Right lobe of liver (tissue), 6 donors: ENCODE measurements at regions of chr19 and their contacts with region 1.

Region 1: DNA sequence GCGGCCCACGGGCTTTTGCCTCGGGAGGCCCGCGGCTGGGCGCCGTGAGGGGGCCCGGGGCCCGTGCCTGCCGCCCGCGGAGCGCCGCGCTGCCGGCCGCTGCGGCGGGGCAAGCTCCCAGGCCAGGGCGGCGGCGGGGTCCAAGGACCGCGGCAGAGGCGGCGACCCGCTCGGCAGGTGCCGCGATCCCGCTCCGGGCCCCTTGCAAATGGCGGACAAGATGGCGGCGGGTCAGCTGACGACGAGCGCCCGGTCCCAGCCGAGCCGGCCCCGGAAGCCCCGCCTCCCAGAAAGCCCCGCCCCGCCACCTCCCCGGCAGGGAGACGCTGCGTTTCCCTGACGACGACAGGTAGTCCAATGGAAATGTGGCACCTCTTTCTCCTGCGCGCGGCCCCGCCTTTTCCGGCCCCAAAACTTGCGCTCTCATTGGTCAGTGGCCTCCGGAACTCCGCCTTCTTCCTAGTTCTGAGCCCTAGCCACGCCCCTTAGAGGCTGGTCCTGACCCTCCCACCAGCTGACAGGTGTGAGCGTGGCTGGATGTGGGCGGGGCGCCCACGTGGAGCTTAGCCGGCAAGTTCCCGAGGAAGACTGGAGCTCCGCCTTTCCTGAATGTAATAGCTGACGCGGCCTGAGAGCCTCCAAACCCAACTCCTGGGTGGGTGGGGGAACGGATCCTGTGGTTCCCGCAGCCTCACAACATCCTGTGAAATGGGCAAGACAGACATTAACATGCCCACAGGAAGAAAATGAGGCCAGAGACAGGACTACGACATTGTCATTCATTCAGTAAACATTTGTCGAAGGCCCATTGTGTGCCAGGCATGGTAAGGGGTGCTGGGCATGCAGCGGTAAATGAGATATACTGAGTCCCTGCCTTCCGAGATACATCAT is at the start of gene AP3D1:
- DNase-seq: peak; percentile 100
- ATAC-seq: peak; percentile 91 to 96 (median 94)
- H3K4me3 ChIP-seq: peak within 1 kb of the TSS; percentile 58 to 98 (median 92)
- H3K27ac ChIP-seq: peak within 1 kb of the TSS; percentile 32 to 80 (median 59)
- H3K4me1 ChIP-seq: peaks cover 0 to 28% (median 14%) of the 10 kb centered on the region in 4 donors
- H3K27me3 ChIP-seq: no peaks in the 10 kb centered on the region
- CTCF ChIP-seq: no peak
- POLR2A ChIP-seq: peak; percentile 48
- total RNA-seq, gene AP3D1: 55.5 to 99.0 (median 65.5) TPM

Region 2: DNA sequence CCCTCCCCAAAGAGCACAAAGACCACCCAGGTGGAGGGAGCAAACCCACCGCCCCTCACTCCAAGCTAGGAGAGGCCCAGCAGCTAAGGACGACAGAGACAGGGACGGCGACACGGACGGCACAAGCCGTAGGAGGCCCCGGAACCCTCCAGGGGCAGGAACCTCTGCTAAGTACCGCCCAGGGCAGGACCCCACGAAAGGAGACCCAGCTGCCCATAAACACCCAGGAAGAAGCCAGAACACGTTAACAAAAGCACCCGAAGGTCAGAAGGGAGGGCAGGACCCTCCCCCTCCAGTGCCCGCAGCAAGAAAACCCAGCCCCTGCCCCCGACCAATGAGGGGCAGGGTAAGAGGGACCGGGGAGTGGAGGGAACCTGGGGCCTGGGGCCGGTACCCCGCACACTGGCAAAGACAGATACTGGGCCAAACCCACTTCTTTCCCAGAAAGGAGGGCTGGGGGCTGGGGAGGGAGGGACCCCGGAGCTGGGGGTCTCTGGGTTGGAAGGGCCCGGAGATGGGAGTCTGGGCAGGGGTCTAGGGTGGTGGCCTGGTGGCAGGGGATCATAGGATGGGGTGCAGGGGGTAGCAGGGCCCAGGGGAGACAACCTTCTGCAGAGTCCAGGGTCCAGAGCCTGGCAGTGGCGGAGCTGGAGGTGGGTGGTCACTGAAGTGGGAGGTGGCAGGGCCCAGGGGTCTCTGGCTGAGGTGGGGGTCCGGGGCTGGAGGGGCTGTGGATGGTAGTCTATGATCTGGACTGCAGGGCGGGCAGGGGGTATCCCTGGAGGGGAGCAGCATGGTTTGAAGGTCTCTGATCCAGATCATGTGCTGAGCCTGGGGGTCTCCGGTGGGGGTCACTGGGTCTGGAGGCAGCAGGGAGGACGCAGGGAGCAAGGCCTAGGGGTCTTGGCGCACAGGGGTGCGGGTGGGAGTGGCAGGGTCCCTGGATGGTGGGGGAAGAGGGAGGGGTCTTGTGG is 138.4 kb before region 1 on chr19:
- intact Hi-C with region 1: no loop called
- DNase-seq: peak in 1 of 3 donors; percentile 48
- ATAC-seq: no peak
- H3K4me3 ChIP-seq: no peak overlapping the region
- H3K27ac ChIP-seq: no peak overlapping the region
- H3K4me1 ChIP-seq: no peaks in the 10 kb centered on the region
- H3K27me3 ChIP-seq: no peaks in the 10 kb centered on the region
- CTCF ChIP-seq: no peak
- POLR2A ChIP-seq: no peak

Region 3: GRCh38 chr19:2199215-2199614 is 47.6 kb after region 1 on chr19:
- intact Hi-C with region 1: no loop called
- DNase-seq: no peak
- ATAC-seq: no peak
- H3K4me3 ChIP-seq: no peak overlapping the region
- H3K27ac ChIP-seq: no peak overlapping the region
- H3K4me1 ChIP-seq: no peaks in the 10 kb centered on the region
- H3K27me3 ChIP-seq: no peaks in the 10 kb centered on the region
- CTCF ChIP-seq: no peak
- POLR2A ChIP-seq: no peak

Region 4: DNA sequence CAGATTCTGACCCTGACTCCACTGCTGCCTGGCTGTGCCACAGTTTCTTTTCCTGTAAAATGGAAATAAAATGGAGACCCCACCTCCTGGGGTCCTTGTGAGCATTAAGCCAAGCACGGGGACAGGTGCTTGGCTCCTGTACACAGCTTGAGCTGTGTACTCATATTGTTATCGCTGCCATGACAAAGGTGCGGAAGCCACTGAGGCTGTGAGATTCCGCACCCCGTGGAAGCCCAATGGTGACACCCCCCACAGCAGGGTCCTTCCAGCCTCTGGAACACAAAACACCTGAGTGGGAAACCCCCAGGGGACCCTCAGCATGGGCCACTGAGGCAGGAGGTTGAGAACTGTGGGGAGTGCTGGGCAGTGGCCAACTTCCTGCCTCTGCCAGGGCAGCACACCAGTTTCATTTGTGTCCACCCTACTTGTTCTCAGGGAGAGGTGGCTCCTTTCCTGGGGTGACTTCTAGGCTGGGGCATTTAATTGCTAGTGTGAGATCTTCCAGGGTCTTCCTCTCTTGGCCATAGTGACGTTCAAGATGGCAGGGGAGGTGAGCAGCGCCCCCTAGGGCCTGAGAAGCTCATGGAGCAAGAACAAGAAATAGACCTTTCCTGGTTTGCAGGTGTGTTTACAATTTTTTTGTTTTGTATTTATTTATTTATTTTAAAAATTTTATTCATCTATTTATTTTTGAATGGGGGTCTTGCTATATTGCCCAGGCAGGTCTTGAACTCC is 110.0 kb after region 1 on chr19:
- intact Hi-C with region 1: no loop called
- DNase-seq: no peak
- ATAC-seq: no peak
- H3K4me3 ChIP-seq: no peak overlapping the region
- H3K27ac ChIP-seq: no peak overlapping the region
- H3K4me1 ChIP-seq: no peaks in the 10 kb centered on the region
- H3K27me3 ChIP-seq: no peaks in the 10 kb centered on the region
- CTCF ChIP-seq: peak; percentile 38 to 61 (median 52)
- POLR2A ChIP-seq: no peak

Region 5: GRCh38 chr19:2315818-2316353 is 164.3 kb after region 1 on chr19:
- intact Hi-C with region 1: no loop called
- DNase-seq: peak; percentile 77 to 84 (median 79)
- ATAC-seq: peak; percentile 89 to 97 (median 93)
- H3K4me3 ChIP-seq: no peak overlapping the region
- H3K27ac ChIP-seq: no peak overlapping the region
- H3K4me1 ChIP-seq: no peaks in the 10 kb centered on the region
- H3K27me3 ChIP-seq: peaks cover 0 to 7% of the 10 kb centered on the region in 2 donors
- CTCF ChIP-seq: peak; percentile 46 to 86 (median 65)
- POLR2A ChIP-seq: no peak

Region 6: DNA sequence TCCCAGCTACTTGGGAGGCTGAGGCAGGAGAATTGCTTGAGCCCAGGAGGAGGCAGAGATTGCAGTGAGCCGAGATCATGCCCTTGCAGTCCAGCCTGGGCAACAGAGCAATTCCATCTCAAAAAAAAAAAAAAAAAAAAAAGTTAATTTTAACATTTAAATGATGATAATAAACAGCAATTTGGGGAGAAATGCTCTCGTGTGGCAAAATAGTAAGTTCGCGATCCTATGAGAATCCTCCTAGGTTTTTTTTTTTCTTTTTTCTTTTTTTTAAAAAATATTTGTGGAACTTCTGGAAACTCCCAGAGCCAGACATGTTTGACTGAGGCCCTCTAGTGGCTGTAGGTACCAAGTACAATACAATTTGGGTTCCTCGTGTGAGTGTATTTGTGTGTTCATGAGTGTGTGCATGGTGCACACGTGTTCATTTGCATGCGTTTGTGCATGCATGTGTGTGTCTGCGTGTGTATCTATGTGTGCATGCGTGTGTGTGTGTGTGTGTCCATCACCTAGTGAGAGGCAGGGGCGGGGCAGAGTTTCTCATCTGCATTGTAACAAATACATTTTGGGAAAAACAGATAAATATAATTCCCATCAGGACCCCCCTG is 239.6 kb after region 1 on chr19:
- intact Hi-C with region 1: loop called in 1 of 2 experiments (anchors 10 kb)
- DNase-seq: no peak
- ATAC-seq: peak; percentile 26 to 73 (median 38)
- H3K4me3 ChIP-seq: no peak overlapping the region
- H3K27ac ChIP-seq: no peak overlapping the region
- H3K4me1 ChIP-seq: peaks cover 0 to 13% (median 0%) of the 10 kb centered on the region in 4 donors
- H3K27me3 ChIP-seq: no peaks in the 10 kb centered on the region
- CTCF ChIP-seq: peak; percentile 57 to 77 (median 72)
- POLR2A ChIP-seq: no peak